ENCODE measurements at regions of chr18 and their contacts with region 1.

Region 1: DNA sequence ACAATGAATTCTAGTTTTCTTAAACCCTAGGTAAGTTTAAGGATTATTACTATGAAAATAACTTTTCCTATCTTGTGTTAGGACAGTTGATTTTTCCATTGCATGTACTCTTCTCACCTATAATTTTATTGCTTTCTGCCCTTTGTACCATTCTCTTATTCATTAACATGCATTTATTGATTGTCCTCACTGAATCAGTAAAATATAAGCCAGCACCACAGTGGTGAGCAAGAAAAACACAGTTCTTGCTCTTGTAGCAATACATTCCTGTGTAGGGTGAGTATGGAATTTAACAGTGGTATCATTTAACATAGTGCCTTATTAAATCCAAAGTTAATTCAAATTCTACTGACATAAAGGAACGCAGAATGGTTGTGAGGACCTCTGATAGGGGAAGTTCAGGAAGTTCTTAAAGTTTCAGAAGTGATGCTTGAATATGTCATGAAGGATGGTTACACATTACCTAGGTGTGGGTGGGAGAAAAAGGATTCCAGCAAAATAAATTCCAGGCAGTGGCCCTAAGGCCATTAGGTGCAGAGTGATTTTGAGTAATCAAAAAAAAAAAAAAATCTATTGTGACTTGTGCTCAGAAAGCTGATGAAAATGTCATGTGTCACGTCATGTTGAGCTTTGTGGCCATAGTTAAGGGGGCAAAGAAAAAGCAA is 104.7 kb upstream of the DSEL start:
- DNase-seq: peak; percentile 34
- H3K4me3 Mint-ChIP-seq: peak overlapping the region; percentile 53
- H3K27ac Mint-ChIP-seq: peak overlapping the region; percentile 67
- H3K4me1 Mint-ChIP-seq: peaks cover 82% of the 10 kb centered on the region
- H3K27me3 Mint-ChIP-seq: no peaks in the 10 kb centered on the region
- CTCF ChIP-seq: no peak

Region 2: GRCh38 chr18:67525328-67526099 is 95.7 kb before region 1 on chr18:
- CTCF ChIA-PET with region 1: no interaction called
- intact Hi-C with region 1: loop called (anchors 1 kb)
- DNase-seq: peak; percentile 70
- H3K4me3 Mint-ChIP-seq: no peak overlapping the region
- H3K27ac Mint-ChIP-seq: peak overlapping the region; percentile 65
- H3K4me1 Mint-ChIP-seq: peaks cover 25% of the 10 kb centered on the region
- H3K27me3 Mint-ChIP-seq: no peaks in the 10 kb centered on the region
- CTCF ChIP-seq: no peak

Region 3: GRCh38 chr18:67600181-67601172 is 20.7 kb before region 1 on chr18:
- CTCF ChIA-PET with region 1: interaction called, 4 read pairs
- intact Hi-C with region 1: loop called (anchors 1 kb)
- DNase-seq: peak; percentile 63
- H3K4me3 Mint-ChIP-seq: peak overlapping the region; percentile 30
- H3K27ac Mint-ChIP-seq: peak overlapping the region; percentile 53
- H3K4me1 Mint-ChIP-seq: peaks cover 54% of the 10 kb centered on the region
- H3K27me3 Mint-ChIP-seq: no peaks in the 10 kb centered on the region
- CTCF ChIP-seq: no peak

Measured in Calu3 (cell line).